Activated CD8-positive, alpha-beta T cell treated with anti-CD3 and anti-CD28 coated beads, Interleukin-2, amount 10 ng/mL, durations not matched to agents 7 days and 5 days (primary cell): ENCODE measurements at regions of chr4 and their contacts with region 1.

Region 1: DNA sequence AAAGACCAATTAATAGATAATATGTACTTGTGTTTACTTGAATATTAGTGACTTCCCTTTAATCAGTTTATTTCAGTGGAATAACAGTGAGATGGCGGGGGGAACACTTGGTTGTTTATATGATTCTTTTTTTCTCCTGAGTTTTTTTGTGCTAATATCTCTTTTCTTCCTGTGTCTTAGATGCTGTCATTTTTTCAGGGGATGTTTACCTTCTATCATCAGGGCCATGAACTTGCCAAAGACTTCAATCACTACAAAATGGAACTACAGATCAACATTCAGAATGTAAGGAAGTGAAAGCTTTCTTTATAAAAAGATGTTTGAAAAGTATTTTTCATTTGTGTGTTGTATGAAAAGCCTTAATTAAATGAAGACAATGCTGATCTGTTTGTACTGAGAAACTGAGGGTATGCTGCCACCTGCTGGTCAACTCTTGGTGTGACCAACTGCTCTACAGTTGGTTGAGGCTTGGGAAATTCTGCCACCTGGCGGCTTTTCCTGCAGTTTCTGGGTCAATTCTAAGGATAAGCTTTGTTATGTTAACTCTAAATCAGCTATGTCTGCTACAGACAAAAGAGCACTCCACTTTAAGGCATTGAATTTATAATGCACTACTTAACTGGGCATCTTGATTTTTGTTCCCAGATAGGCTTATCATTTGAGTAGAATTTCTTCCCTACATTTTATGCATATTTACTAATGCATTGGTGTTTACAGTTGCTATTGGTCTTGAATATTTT is 134.8 kb downstream of the ARHGAP10 start:
- DNase-seq: peak; percentile 96
- ATAC-seq: peak; percentile 98
- H3K4me3 Mint-ChIP-seq: no peak overlapping the region
- H3K27ac Mint-ChIP-seq: no peak overlapping the region
- H3K4me1 Mint-ChIP-seq: peaks cover 3% of the 10 kb centered on the region
- H3K27me3 Mint-ChIP-seq: no peaks in the 10 kb centered on the region

Region 2: GRCh38 chr4:147447786-147448185 is 418.9 kb before region 1 on chr4:
- CTCF ChIA-PET with region 1: no interaction called
- POLR2A ChIA-PET with region 1: no interaction called
- DNase-seq: no peak
- ATAC-seq: no peak
- H3K4me3 Mint-ChIP-seq: no peak overlapping the region
- H3K27ac Mint-ChIP-seq: no peak overlapping the region
- H3K4me1 Mint-ChIP-seq: no peaks in the 10 kb centered on the region
- H3K27me3 Mint-ChIP-seq: no peaks in the 10 kb centered on the region

Region 3: GRCh38 chr4:147590249-147590920 is 276.3 kb before region 1 on chr4:
- CTCF ChIA-PET with region 1: interaction called, 58 read pairs
- POLR2A ChIA-PET with region 1: no interaction called
- DNase-seq: peak; percentile 61
- ATAC-seq: no peak
- H3K4me3 Mint-ChIP-seq: no peak overlapping the region
- H3K27ac Mint-ChIP-seq: no peak overlapping the region
- H3K4me1 Mint-ChIP-seq: peaks cover 5% of the 10 kb centered on the region
- H3K27me3 Mint-ChIP-seq: peaks cover 14% of the 10 kb centered on the region

Region 4: GRCh38 chr4:147658501-147658900 is 208.2 kb before region 1 on chr4:
- CTCF ChIA-PET with region 1: interaction called, 12 read pairs
- POLR2A ChIA-PET with region 1: no interaction called
- DNase-seq: no peak
- ATAC-seq: no peak
- H3K4me3 Mint-ChIP-seq: no peak overlapping the region
- H3K27ac Mint-ChIP-seq: no peak overlapping the region
- H3K4me1 Mint-ChIP-seq: no peaks in the 10 kb centered on the region
- H3K27me3 Mint-ChIP-seq: no peaks in the 10 kb centered on the region

Region 5: DNA sequence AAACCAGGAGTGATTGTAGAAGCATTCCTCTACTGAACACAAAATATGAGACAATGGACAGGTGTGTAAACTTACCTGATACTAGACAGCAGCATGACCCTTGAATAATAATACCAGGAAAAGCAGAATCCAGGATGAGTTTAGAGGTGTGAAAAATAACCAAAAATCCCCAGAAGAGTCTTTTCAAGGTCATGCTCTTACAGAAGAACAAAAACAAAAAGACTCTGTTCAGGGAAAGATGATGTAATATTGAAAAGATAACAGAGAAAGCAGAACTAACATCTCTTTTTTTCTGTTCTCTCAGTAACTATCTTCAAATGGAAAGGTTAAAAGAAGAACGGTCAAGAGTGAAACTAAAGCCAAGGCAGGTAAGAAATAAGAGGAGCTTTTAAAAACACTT is 148.8 kb before region 1 on chr4:
- CTCF ChIA-PET with region 1: interaction called, 160 read pairs
- POLR2A ChIA-PET with region 1: no interaction called
- DNase-seq: no peak
- ATAC-seq: no peak
- H3K4me3 Mint-ChIP-seq: no peak overlapping the region
- H3K27ac Mint-ChIP-seq: no peak overlapping the region
- H3K4me1 Mint-ChIP-seq: no peaks in the 10 kb centered on the region
- H3K27me3 Mint-ChIP-seq: peaks cover 19% of the 10 kb centered on the region

Region 6: GRCh38 chr4:147786031-147786430 is 80.7 kb before region 1 on chr4:
- CTCF ChIA-PET with region 1: interaction called, 23 read pairs
- POLR2A ChIA-PET with region 1: no interaction called
- DNase-seq: no peak
- ATAC-seq: no peak
- H3K4me3 Mint-ChIP-seq: no peak overlapping the region
- H3K27ac Mint-ChIP-seq: no peak overlapping the region
- H3K4me1 Mint-ChIP-seq: peaks cover 4% of the 10 kb centered on the region
- H3K27me3 Mint-ChIP-seq: no peaks in the 10 kb centered on the region

Region 7: DNA sequence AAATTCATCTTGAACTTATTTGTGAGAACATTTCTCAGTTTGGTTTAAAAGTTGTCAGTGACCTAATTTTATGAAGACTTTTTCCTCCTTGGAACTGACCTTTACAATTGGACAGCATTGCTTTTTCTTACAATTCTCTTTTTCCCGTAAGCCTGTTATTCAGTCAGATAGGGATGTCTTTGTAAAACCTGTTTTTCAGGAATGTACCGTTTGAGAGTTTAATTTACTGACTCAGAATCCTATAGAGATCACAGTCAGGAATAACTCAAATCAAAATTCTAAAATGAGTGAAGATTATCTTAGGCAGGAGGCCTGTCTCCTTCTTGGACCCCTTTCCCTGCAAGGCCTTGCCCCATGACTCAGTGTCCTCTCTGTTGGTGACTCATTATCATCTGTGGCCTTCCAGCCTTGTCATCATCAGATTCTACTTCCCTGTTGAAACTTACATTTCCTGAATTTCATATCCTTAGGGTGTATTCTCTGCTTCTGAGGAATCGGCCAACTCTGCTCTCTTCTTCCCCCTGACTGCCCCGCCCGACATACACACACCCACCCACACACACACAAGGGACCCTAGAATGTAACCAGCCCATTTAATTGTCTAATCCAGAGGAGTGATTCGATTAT is 35.0 kb before region 1 on chr4:
- CTCF ChIA-PET with region 1: interaction called, 12 read pairs
- POLR2A ChIA-PET with region 1: no interaction called
- DNase-seq: no peak
- ATAC-seq: no peak
- H3K4me3 Mint-ChIP-seq: no peak overlapping the region
- H3K27ac Mint-ChIP-seq: no peak overlapping the region
- H3K4me1 Mint-ChIP-seq: no peaks in the 10 kb centered on the region
- H3K27me3 Mint-ChIP-seq: no peaks in the 10 kb centered on the region